Calu3 (cell line): ENCODE measurements at regions of chr2 and their contacts with region 1.

Region 1: GRCh38 chr2:64105670-64106461 is 38.4 kb downstream of the PELI1 start:
- DNase-seq: peak; percentile 37
- H3K4me3 Mint-ChIP-seq: peak overlapping the region; percentile 31
- H3K27ac Mint-ChIP-seq: peak overlapping the region; percentile 82
- H3K4me1 Mint-ChIP-seq: peaks cover 81% of the 10 kb centered on the region
- H3K27me3 Mint-ChIP-seq: no peaks in the 10 kb centered on the region
- CTCF ChIP-seq: no peak

Region 2: GRCh38 chr2:64119369-64119768 is 13.5 kb after region 1 on chr2:
- CTCF ChIA-PET with region 1: interaction called, 9 read pairs
- intact Hi-C with region 1: loop called (anchors 2 kb)
- DNase-seq: no peak
- H3K4me3 Mint-ChIP-seq: peak overlapping the region; percentile 56
- H3K27ac Mint-ChIP-seq: peak overlapping the region; percentile 67
- H3K4me1 Mint-ChIP-seq: peaks cover 64% of the 10 kb centered on the region
- H3K27me3 Mint-ChIP-seq: no peaks in the 10 kb centered on the region
- CTCF ChIP-seq: no peak